GM18951 (cell line): ENCODE measurements at regions of chr5 and their contacts with region 1.

Region 1: GRCh38 chr5:152532714-152533113 is 127.6 kb upstream of the NMUR2 start:
- POLR2A ChIP-seq: no peak

Region 2: DNA sequence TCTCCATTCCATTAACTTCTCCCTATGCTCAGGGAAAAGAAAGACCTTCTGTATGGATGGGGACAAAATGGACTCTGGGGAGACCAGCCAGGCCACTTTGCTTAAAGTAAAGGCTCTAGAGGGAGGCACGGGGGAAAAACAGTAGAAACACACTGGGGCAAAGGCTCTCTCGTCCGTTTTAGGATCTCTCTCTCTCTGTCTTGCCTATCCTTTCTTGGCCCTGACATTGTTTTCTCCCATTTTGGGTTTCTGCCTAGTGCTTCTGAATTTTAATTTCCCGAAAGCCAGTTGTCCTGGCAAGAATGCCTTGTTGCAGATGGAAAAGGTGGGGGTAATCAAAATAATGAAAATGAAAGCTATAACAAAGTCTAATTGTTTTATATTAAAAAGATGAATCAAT is 155.8 kb before region 1 on chr5:
- in situ Hi-C with region 1: no loop called
- POLR2A ChIP-seq: no peak

Region 3: GRCh38 chr5:153964880-153965645 is 1432.3 kb after region 1 on chr5:
- in situ Hi-C with region 1: loop called (anchors 10 kb)
- POLR2A ChIP-seq: no peak